HEK293T (cell line): ENCODE measurements at regions of chr2 and their contacts with region 1.

Region 1: DNA sequence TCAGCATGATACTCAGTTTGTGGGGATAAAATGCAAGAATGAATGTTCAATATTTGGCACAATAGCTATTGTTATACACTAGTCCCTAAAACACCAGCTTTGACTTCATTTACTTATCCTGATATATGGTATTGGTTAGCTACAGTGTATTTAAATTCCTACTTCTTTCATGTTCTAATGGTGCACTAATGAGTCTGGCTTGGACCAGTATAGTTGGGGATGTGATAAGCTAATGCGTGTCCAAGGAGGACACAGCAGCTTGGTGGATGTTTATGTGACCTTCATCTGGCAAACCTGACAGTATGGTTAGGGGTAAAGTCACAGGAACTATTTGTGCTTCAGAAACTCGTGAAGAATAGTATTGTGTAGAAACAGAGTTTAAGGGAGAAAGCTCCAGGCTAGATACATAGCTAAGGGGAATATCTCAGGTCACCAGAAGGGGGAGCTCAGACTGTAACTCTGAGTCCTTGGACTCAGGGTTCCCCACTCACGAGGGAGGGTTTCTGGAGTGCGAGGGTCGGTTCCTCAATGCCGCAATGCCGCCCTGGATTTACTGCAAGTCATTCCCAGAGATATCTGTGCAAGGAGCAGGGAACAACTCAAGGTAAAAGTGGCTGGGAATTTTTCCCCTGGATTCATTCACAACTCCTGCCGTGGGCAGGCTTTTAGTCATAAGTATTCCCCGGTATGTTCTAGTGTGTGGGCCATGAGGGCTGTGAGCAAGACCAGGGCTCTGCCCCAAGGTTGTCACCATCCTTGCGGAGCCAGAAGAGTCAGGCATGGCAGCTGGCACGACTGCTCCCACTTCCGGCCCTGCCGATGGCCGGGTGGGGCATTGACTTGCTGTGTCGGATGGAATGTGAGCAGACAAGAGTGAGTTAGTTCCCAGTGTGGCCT is 14.5 kb downstream of the IL1R2 start:
- DNase-seq: peak; percentile 59

Region 2: DNA sequence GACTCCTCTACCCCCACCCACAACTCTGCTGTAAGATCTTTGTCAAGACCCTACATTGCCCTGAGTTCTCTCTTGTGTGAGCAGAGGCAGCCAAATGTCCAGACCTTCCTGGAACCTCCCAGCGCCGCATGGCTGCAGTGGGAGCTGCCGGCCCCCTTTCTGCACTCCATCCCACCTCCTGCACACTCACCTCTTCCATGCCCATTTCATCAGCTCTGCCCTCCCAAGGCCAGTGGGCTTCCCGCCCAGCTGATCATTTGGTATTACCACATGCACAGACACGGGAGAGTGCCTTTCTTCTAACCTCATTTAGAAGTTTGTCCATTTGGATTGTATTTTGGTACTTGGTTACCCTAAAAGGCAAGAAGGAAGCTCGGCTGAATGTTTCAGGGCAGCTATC is 12.5 kb before region 1 on chr2:
- CTCF ChIA-PET with region 1: interaction called, 13 read pairs
- POLR2A ChIA-PET with region 1: no interaction called
- DNase-seq: no peak

Region 3: DNA sequence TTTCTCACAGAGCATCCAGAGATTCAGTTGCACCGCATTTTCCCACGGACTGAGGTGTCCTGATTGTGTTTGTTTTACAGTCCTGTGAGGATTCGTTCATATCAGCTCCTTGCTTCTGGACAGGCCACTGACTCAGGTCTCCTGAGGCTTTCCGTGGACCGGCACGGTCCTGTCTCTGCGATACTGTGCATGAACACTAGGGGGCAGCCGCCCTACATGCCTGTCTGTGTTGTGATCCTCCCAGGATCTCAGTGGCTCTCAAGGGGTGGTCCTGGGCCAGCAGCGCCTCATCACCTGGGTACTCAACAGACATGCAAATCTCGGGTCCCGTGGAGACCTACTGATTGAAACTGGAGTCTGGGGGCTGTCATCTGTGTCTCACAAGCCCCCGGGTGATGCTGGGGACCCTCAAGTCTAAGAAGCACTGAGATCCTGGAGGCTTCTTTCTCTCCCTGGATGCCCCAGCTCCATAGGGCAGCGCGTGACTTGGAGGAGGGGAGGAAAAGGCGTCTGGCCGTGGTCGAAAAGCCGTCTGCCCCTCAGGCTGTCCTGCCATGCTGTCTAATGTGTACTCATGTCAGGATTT is 14.5 kb after region 1 on chr2:
- CTCF ChIA-PET with region 1: interaction called, 14 read pairs
- POLR2A ChIA-PET with region 1: no interaction called
- DNase-seq: peak; percentile 84

Region 4: GRCh38 chr2:102240640-102241370 is 234.6 kb after region 1 on chr2:
- CTCF ChIA-PET with region 1: interaction called, 14 read pairs
- POLR2A ChIA-PET with region 1: no interaction called
- DNase-seq: peak; percentile 83